ENCODE measurements at regions of chr2 and their contacts with region 1.

Region 1: DNA sequence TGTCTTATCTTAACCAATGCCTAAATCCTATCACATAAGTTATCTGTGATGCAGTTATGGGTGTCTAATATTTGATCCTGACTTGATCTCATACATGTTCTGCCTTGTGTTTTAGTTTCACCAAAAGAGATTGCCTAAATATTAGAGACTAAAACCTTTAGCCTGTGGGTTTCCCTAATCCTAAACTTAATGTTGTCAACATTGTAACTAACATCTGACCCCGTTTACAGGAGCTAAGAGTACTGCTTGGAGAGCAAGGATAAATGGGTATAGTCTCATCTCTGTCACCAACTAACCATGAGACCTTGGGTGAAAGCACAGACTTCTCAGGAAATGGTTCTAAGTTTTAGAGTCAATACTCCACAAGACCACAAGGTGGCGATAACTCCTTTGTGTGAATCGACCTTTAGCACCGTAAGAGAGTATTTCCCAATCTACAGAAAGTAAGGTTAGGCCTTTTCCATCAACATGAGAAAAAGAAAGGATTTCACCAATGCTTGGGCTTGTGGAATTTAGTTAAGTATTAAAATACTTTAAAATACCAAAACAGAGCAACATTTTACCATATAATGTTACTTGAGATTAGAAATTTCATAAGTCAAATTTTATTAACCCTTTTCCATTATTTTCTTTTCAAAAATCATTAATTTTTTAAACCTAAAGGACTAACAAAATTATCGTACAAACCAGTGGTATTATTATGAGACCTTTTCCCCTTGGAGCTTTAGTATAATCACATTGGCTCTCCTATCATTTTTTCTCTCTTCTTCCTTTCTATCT is 60.5 kb downstream of the G6PC2 start:
- H3K4me3 ChIP-seq: no peak overlapping the region
- H3K27ac ChIP-seq: no peak overlapping the region
- H3K4me1 ChIP-seq: no peaks in the 10 kb centered on the region
- CTCF ChIP-seq: peak; percentile 35; the same call in 1 of the 2 replicates

Region 2: GRCh38 chr2:168948621-168949212 is 12.9 kb before region 1 on chr2:
- CTCF ChIA-PET with region 1: interaction called, 24 read pairs
- POLR2A ChIA-PET with region 1: no interaction called
- H3K4me3 ChIP-seq: no peak overlapping the region
- H3K27ac ChIP-seq: no peak overlapping the region
- H3K4me1 ChIP-seq: no peaks in the 10 kb centered on the region
- CTCF ChIP-seq: no peak

Region 3: DNA sequence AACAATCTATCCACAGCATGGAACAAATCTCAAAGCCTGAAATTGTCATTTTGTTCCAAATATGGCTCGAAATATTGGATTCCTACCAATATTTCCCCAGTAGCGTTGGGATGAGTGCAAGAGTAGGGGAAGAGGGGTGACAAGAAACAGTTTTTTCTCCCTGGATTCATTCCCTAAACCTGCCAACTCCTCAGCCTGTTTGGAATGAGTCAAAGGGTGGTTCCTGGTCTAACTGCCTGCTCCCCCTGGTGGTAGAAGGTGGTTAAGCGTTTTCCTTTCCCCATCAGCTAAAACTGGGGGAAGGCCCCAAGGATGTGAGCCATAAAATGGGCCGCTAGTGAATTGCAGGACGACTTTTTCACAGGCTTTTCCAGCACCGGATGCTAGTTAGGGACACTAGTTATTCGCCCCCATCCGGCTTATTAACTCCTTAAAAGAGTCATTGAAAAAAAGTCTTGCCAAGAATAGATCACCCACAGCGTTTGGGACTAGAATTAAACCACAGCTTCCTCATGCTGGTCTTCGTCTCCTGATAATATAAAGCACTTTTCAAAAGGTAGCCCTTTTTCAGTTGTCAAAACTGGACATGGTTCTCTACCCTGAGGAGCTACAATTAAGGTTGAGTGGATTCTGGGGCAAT is 180.2 kb after region 1 on chr2:
- CTCF ChIA-PET with region 1: interaction called, 22 read pairs
- POLR2A ChIA-PET with region 1: no interaction called
- H3K4me3 ChIP-seq: no peak overlapping the region
- H3K27ac ChIP-seq: no peak overlapping the region
- H3K4me1 ChIP-seq: no peaks in the 10 kb centered on the region
- CTCF ChIP-seq: peak; percentile 53

Region 4: GRCh38 chr2:169221745-169222369 is 260.2 kb after region 1 on chr2:
- CTCF ChIA-PET with region 1: interaction called, 18 read pairs
- POLR2A ChIA-PET with region 1: no interaction called
- H3K4me3 ChIP-seq: no peak overlapping the region
- H3K27ac ChIP-seq: no peak overlapping the region
- H3K4me1 ChIP-seq: no peaks in the 10 kb centered on the region
- CTCF ChIP-seq: peak; percentile 26; the same call in 1 of the 2 replicates

Measured in HEK293 (cell line).